ENCODE measurements at regions of chr10 and their contacts with region 1.

Region 1: DNA sequence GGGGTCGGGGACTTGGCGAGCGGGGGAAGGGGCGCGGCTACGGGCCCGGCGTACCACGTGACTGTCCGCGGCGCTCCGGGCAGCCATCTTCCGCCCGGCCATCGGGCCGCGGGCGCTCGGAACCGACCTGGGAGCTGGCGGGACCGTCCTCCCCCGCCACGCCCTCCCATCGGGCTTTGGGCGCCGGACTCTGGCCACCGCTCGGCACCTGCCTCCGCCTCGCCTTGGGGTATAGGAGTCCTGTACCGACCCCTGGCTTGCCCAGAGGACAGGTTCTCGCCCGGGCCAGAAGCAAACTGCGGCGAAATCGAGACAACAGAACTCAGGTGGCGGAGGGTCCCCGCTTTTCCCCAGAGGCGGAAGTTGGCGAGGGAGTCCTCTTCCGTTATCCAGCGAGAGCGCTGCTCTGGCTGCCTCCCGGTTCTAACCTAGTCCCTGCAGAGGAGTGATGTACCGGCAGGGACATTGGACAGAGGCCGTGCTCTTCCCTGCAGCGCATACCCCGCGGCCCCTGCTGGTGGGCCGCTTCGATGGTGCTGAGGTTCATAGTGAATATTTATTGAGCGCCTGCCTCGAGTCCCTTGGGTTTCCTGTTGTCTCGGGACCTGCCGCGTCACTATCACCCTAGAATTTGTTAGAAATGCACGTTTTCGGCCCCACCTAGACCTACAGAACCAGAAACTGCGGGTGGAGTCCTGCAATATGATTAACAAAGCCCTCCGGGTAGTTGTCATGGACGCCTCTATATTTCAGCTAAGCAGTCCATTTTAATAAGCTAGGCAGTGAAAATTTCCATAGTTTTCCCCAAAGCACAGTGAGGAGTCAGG is 1.3 kb upstream of the SGMS1 start:
- DNase-seq: no peak
- ATAC-seq: peak; percentile 51
- H3K4me3 Mint-ChIP-seq: peak overlapping the region; percentile 91
- H3K27ac Mint-ChIP-seq: peak overlapping the region; percentile 96
- H3K4me1 Mint-ChIP-seq: peaks cover 30% of the 10 kb centered on the region
- H3K27me3 Mint-ChIP-seq: no peaks in the 10 kb centered on the region
- CTCF ChIP-seq: no peak

Region 2: GRCh38 chr10:49538381-49539319 is 1086.4 kb before region 1 on chr10 and contains the start of gene ERCC6:
- CTCF ChIA-PET with region 1: no interaction called
- POLR2A ChIA-PET with region 1: no interaction called
- intact Hi-C with region 1: loop called (anchors 1 kb)
- DNase-seq: peak; percentile 92
- ATAC-seq: peak; percentile 82
- H3K4me3 Mint-ChIP-seq: peak within 1 kb of the TSS; percentile 93
- H3K27ac Mint-ChIP-seq: peak within 1 kb of the TSS; percentile 91
- H3K4me1 Mint-ChIP-seq: peaks cover 51% of the 10 kb centered on the region
- H3K27me3 Mint-ChIP-seq: peaks cover 17% of the 10 kb centered on the region
- CTCF ChIP-seq: no peak
- total RNA-seq, gene ERCC6: 37.4 and 46.2 TPM in 2 replicates

Region 3: GRCh38 chr10:50260791-50261281 is 364.2 kb before region 1 on chr10:
- CTCF ChIA-PET with region 1: no interaction called
- POLR2A ChIA-PET with region 1: interaction called, 3 read pairs
- intact Hi-C with region 1: loop called (anchors 2 kb)
- DNase-seq: no peak
- ATAC-seq: peak; percentile 97
- H3K4me3 Mint-ChIP-seq: peak overlapping the region; percentile 57
- H3K27ac Mint-ChIP-seq: peak overlapping the region; percentile 60
- H3K4me1 Mint-ChIP-seq: peaks cover 36% of the 10 kb centered on the region
- H3K27me3 Mint-ChIP-seq: peaks cover 12% of the 10 kb centered on the region
- CTCF ChIP-seq: no peak

Region 4: DNA sequence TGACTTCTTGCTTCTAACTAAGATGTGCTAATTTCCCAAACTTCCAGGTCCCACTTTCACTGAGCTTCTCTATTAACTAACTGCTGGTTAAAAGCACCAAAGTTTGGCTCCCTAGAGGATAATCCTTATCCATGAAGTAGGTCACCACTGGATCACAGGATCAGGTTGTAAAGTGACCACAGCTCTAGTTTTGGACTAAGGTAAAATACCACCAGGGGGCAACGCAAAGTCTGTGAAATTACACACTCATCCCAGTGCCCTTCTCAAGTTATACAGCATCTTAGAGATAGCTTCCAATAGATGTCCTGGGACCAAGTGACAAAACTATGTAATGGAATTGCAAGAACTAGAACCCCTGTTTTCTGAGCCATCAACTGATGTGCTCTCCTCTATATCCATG is 257.3 kb before region 1 on chr10:
- CTCF ChIA-PET with region 1: interaction called, 9 read pairs
- POLR2A ChIA-PET with region 1: no interaction called
- intact Hi-C with region 1: loop called (anchors 1 kb)
- DNase-seq: no peak
- ATAC-seq: no peak
- H3K4me3 Mint-ChIP-seq: no peak overlapping the region
- H3K27ac Mint-ChIP-seq: no peak overlapping the region
- H3K4me1 Mint-ChIP-seq: peaks cover 24% of the 10 kb centered on the region
- H3K27me3 Mint-ChIP-seq: no peaks in the 10 kb centered on the region
- CTCF ChIP-seq: no peak

Region 5: DNA sequence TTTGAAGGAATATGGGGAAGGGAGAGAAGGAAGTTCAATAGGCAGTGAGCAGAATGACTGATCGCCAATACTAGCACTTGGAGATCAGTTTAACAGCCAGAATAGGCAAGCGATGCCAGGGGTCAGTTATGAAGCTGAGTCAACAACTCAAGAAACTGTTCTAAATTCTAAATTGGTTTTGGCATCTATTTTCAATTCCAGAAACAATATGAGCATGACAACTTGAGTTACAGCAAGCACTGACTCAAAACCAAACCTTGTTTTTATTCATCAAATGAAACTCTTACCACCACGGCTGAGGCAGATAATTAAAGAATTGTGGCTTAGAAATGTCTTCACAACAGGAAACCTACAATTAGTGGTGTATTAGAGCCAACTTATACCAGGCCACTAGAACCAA is 193.3 kb before region 1 on chr10:
- CTCF ChIA-PET with region 1: no interaction called
- POLR2A ChIA-PET with region 1: no interaction called
- intact Hi-C with region 1: no loop called
- DNase-seq: no peak
- ATAC-seq: peak; percentile 61
- H3K4me3 Mint-ChIP-seq: no peak overlapping the region
- H3K27ac Mint-ChIP-seq: no peak overlapping the region
- H3K4me1 Mint-ChIP-seq: peaks cover 12% of the 10 kb centered on the region
- H3K27me3 Mint-ChIP-seq: no peaks in the 10 kb centered on the region
- CTCF ChIP-seq: no peak

Region 6: DNA sequence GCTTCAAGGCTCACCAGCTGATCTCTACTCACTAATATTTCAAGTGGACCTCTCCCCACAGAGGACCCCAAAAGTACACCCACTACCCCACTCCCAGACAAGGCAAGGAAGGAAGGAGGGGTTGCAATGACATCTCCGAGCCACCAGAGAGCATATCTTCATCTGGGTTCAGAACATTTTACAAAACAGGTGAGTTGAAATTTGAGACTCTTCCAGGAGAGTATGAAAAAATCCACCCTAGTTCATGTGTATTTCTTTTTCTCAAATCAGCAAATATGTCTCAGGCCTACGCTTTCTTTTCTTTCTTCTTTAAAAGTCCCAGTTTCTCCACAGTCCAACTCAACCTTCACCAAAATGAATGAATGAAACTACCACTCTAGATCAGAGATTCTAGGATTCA is 63.3 kb before region 1 on chr10:
- CTCF ChIA-PET with region 1: interaction called, 3 read pairs
- POLR2A ChIA-PET with region 1: no interaction called
- intact Hi-C with region 1: loop called (anchors 1 kb)
- DNase-seq: no peak
- ATAC-seq: peak; percentile 47
- H3K4me3 Mint-ChIP-seq: no peak overlapping the region
- H3K27ac Mint-ChIP-seq: no peak overlapping the region
- H3K4me1 Mint-ChIP-seq: peaks cover 7% of the 10 kb centered on the region
- H3K27me3 Mint-ChIP-seq: no peaks in the 10 kb centered on the region
- CTCF ChIP-seq: no peak

Region 7: DNA sequence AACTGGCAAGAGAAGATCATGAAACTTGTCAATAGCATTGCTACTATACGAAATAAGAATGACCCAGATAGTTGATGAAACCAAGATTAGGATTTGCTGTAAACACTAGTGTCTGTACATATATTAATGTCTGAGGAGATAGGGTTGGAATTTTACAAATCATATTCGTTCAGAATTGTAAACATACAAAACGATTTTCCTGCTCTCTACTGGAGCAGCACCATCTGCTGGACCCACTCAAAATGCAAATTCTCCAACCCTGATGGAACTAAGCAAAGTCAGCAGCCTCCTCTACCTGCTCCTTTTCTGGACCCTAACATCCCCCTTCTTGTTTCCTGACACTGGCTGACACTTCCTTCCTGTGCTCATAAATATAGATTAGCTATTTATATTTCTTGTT is 28.1 kb after region 1 on chr10:
- CTCF ChIA-PET with region 1: interaction called, 5 read pairs
- POLR2A ChIA-PET with region 1: interaction called, 37 read pairs
- intact Hi-C with region 1: loop called (anchors 1 kb)
- DNase-seq: no peak
- ATAC-seq: peak; percentile 27
- H3K4me3 Mint-ChIP-seq: no peak overlapping the region
- H3K27ac Mint-ChIP-seq: no peak overlapping the region
- H3K4me1 Mint-ChIP-seq: peaks cover 31% of the 10 kb centered on the region
- H3K27me3 Mint-ChIP-seq: no peaks in the 10 kb centered on the region
- CTCF ChIP-seq: no peak

Region 8: GRCh38 chr10:50679149-50679548 is 54.1 kb after region 1 on chr10:
- CTCF ChIA-PET with region 1: no interaction called
- POLR2A ChIA-PET with region 1: no interaction called
- intact Hi-C with region 1: no loop called
- DNase-seq: no peak
- ATAC-seq: no peak
- H3K4me3 Mint-ChIP-seq: no peak overlapping the region
- H3K27ac Mint-ChIP-seq: no peak overlapping the region
- H3K4me1 Mint-ChIP-seq: no peaks in the 10 kb centered on the region
- H3K27me3 Mint-ChIP-seq: no peaks in the 10 kb centered on the region
- CTCF ChIP-seq: no peak

Measured in activated B cell treated with CpG ODN at 0.5 μM for 24 hours (primary cell).